ENCODE measurements at regions of chr2 and their contacts with region 1.

Region 1: DNA sequence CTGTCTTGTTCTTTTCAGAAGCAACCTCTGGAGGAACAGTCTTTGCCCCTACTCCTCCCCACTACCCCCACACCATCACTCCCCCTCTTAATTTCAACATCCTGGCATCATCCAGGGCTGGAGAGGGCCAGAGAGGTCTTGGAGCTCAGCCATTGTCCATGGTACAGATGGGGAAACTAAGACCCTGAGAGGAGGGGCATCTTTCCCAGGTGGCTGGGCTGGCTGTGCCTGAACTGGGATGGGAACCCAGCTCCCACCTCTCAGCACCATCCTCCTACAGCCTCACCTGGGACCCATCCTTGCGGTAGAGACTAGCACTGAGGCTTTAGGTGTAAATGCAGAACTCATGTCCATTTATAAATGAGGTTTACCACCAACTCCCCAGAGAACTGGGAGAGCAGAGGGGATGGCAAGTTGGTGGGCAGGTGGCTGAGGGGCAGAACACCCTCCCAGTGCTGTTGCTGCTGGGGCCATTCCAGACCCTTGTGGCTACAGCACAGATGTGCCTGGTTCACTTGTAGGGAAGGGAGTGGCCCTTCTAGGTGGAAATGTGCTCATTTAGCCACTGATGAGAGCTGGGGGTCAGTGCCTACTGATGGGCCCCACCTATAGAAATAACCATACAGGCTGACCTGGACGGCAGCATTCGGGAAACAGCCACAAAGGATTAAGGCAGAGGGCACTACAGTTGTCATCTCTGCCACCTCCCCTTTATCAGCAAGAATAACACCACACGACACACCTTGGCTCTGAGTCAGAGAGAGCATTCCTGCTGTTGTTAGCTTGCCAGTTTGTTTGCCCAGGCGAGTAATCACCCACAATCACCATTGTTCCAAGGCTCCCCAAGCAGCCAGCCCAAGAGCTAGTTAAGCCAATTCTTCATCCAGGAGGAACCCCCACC is 2.1 kb downstream of the MLPH start:
- DNase-seq: no peak
- ATAC-seq: peak; percentile 44
- H3K4me3 ChIP-seq: peak overlapping the region in 1 of 2 experiments; percentile 89; a peak in 2 of 4 replicates
- H3K27ac ChIP-seq: peak overlapping the region; percentile 56
- H3K4me1 ChIP-seq: peaks cover 16% of the 10 kb centered on the region
- H3K27me3 ChIP-seq: no peaks in the 10 kb centered on the region
- CTCF ChIP-seq: no peak

Region 2: GRCh38 chr2:237403024-237403882 is 85.9 kb before region 1 on chr2:
- CTCF ChIA-PET with region 1: no interaction called
- POLR2A ChIA-PET with region 1: no interaction called
- in situ Hi-C with region 1: no loop called
- intact Hi-C with region 1: no loop called
- DNase-seq: no peak
- ATAC-seq: no peak
- H3K4me3 ChIP-seq: no peak overlapping the region
- H3K27ac ChIP-seq: peak overlapping the region; percentile 19; the same call in 1 of the 2 replicates
- H3K4me1 ChIP-seq: no peaks in the 10 kb centered on the region
- H3K27me3 ChIP-seq: no peaks in the 10 kb centered on the region
- CTCF ChIP-seq: no peak

Region 3: DNA sequence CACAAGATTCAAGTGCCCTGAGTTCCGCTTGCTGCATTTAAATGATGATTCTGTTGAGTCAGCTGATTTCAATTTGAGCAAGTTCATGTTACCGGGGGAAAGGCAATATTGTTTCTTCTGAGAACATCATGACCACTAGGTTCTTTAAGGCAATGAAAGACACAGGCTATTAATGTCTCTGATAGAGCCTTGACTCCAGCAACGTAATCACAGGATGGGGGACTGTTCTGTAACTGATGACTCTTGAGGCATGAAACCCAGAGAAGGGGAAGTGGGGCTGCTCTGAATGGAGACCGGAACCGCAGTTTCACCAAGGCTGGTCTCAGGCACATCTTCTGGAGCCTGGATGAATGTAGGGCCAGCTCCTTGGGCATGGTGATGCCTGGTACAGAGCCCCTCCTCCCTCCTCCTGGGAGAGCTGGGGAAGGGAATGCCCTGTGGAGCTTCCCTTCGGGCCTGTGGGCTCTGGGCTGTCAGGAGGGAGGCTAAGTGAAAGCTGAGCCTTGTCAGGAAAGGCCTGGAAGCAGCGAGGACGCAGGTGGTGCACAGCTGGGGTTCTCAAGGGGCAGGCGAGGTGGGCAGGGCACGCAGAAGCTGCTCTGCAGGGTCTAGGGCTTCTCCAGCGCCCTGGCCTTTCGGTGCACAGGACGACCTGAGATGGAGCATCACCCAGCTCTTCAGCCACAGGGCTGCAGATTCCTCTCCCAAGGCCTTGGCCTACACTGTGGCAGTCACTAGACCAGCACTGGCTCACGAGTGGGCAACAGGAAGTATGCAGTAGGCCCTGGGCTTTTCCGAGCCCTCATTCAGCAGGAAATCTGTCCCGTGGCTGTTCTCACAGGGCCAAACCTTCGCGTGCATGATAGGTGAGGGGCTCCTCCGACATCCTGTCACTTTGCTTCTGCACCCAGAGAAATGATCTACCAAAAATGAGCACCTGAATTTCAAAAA is 40.6 kb after region 1 on chr2:
- CTCF ChIA-PET with region 1: no interaction called
- POLR2A ChIA-PET with region 1: no interaction called
- in situ Hi-C with region 1: no loop called
- intact Hi-C with region 1: no loop called
- DNase-seq: no peak
- ATAC-seq: peak; percentile 30; the same call in 1 of the 2 replicates
- H3K4me3 ChIP-seq: no peak overlapping the region
- H3K27ac ChIP-seq: no peak overlapping the region
- H3K4me1 ChIP-seq: no peaks in the 10 kb centered on the region
- H3K27me3 ChIP-seq: no peaks in the 10 kb centered on the region
- CTCF ChIP-seq: no peak

Region 4: DNA sequence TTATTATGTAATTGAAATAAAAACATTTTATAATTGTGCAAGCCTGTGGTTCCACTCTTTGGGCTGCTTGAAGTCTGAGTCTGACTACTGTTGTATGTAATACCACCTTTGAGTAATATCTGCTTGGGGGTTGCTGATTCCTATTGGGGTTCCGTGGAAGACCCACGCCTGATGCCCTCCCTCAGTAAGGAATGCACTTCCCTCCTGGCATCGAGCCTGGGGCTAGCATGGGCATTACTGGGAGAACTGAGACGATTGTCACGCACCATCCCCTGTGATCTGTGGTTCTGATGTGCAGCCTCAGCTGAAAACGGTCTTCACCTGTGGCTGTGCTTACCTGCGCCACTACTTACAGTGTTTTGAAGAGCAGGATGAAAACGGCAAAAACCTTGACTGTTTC is 276.7 kb after region 1 on chr2:
- CTCF ChIA-PET with region 1: interaction called, 20 read pairs
- POLR2A ChIA-PET with region 1: no interaction called
- in situ Hi-C with region 1: no loop called
- intact Hi-C with region 1: no loop called
- DNase-seq: no peak
- ATAC-seq: no peak
- H3K4me3 ChIP-seq: no peak overlapping the region
- H3K27ac ChIP-seq: no peak overlapping the region
- H3K4me1 ChIP-seq: no peaks in the 10 kb centered on the region
- H3K27me3 ChIP-seq: no peaks in the 10 kb centered on the region
- CTCF ChIP-seq: no peak